Activated naive CD4-positive, alpha-beta T cell treated with anti-CD3 and anti-CD28 coated beads for 36 hours (primary cell): ENCODE measurements at regions of chr19 and their contacts with region 1.

Region 1: DNA sequence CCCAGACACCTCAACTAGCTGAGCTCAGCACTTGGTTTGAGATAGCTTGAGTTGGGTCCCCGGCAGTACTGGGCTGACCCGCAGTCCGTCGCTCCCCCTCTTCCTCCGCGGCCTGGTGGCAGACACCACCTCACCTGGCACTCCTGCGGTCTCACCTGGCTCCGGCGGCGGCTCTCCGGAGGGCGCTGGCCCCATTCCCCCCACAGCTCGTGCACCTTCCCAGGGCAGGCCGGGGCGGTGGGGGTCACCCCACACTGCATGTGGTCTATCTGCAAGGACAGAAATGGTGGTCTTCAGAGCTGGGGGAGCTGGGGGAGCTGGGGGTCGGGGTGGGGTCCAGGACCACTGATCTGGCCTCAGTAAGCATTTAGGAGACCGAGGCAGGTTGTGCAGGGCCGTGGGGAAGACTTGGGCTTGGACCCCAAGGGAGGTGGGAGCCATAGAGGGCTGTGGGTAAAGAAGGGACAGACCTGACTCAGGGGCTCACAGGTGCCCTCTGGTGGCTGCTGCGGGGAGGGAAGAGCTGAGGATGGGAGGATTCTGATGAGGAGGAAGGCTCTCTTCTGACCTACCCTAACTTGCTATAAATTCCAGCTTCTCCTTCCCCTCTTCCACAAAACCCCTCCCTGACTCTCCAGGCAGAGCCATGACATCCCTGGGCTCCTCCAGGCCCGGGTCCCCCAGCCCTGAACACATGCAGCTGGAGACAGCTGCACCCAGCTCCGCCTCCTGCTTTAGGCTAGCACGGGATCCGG is 6.7 kb upstream of the PLIN4 start:
- DNase-seq: peak; percentile 84
- H3K4me3 Mint-ChIP-seq: no peak overlapping the region
- H3K27ac Mint-ChIP-seq: no peak overlapping the region
- H3K4me1 Mint-ChIP-seq: no peaks in the 10 kb centered on the region
- H3K27me3 Mint-ChIP-seq: no peaks in the 10 kb centered on the region

Region 2: GRCh38 chr19:4488496-4488895 is 36.5 kb before region 1 on chr19:
- CTCF ChIA-PET with region 1: no interaction called
- intact Hi-C with region 1: no loop called
- DNase-seq: no peak
- H3K4me3 Mint-ChIP-seq: no peak overlapping the region
- H3K27ac Mint-ChIP-seq: no peak overlapping the region
- H3K4me1 Mint-ChIP-seq: no peaks in the 10 kb centered on the region
- H3K27me3 Mint-ChIP-seq: no peaks in the 10 kb centered on the region

Region 3: GRCh38 chr19:4534836-4535658 is 10.1 kb after region 1 on chr19 and contains the start of gene PLIN5:
- CTCF ChIA-PET with region 1: interaction called, 17 read pairs
- intact Hi-C with region 1: no loop called
- DNase-seq: peak; percentile 40
- H3K4me3 Mint-ChIP-seq: no peak within 1 kb of the TSS
- H3K27ac Mint-ChIP-seq: no peak within 1 kb of the TSS
- H3K4me1 Mint-ChIP-seq: peaks cover 10% of the 10 kb centered on the region
- H3K27me3 Mint-ChIP-seq: peaks cover 14% of the 10 kb centered on the region
- total RNA-seq, gene PLIN5: 0.07 to 0.25 TPM